ENCODE measurements at regions of chr14 and their contacts with region 1.

Region 1: DNA sequence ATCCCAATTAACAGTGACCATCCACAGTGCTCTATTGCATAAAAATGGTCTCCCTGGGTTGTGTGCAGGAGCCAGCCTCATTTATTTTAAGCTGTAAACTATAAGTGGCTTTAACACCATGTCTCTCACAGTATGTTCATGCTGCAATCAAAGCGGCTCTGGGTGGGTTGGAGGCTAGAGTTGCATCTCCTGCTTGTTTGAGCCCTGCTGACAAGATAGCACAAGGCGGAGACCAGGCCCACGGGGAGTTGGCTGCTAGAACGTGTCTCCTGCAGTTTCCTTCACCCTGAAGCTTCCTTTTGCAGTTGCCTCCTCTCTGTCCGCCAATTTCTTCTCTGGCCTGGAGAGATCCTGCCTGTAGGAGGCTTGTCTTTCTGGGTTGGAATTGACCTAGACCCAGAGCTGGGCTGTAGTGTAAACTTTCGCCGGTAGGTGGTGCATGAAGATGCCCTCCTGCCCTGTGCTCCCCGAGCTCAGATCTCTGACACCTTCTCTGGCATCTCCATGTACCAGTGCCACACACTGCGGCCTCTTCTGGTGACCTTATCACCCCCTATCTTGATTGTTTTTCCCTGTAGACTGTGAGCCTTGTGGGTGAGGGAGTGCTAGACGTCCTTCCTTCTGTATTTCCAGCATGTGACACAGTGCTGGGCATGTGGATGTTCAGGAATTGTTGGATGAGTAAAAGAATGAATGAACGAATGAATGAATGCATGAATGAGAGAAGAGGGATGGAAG is 10.3 kb downstream of the OTUB2 start:
- DNase-seq: peak; percentile 86
- ATAC-seq: peak; percentile 97
- H3K4me3 Mint-ChIP-seq: no peak overlapping the region
- H3K27ac Mint-ChIP-seq: no peak overlapping the region
- H3K4me1 Mint-ChIP-seq: peaks cover 7% of the 10 kb centered on the region
- H3K27me3 Mint-ChIP-seq: peaks cover 2% of the 10 kb centered on the region

Region 2: GRCh38 chr14:93970549-93970946 is 65.9 kb before region 1 on chr14:
- CTCF ChIA-PET with region 1: interaction called, 12 read pairs
- POLR2A ChIA-PET with region 1: no interaction called
- DNase-seq: peak; percentile 75
- ATAC-seq: peak; percentile 76
- H3K4me3 Mint-ChIP-seq: peak overlapping the region; percentile 80
- H3K27ac Mint-ChIP-seq: peak overlapping the region; percentile 95
- H3K4me1 Mint-ChIP-seq: peaks cover 86% of the 10 kb centered on the region
- H3K27me3 Mint-ChIP-seq: no peaks in the 10 kb centered on the region

Region 3: GRCh38 chr14:94026173-94026888 is 10.2 kb before region 1 on chr14 and contains the start of gene OTUB2:
- CTCF ChIA-PET with region 1: interaction called, 69 read pairs
- POLR2A ChIA-PET with region 1: no interaction called
- DNase-seq: peak; percentile 98
- ATAC-seq: peak; percentile 99
- H3K4me3 Mint-ChIP-seq: peak within 1 kb of the TSS; percentile 71
- H3K27ac Mint-ChIP-seq: peak within 1 kb of the TSS; percentile 68
- H3K4me1 Mint-ChIP-seq: peaks cover 48% of the 10 kb centered on the region
- H3K27me3 Mint-ChIP-seq: peaks cover 9% of the 10 kb centered on the region
- total RNA-seq, gene OTUB2: 1.4 to 1.7 TPM

Region 4: GRCh38 chr14:94056579-94057308 is 20.3 kb after region 1 on chr14:
- CTCF ChIA-PET with region 1: interaction called, 52 read pairs
- POLR2A ChIA-PET with region 1: no interaction called
- DNase-seq: peak; percentile 59
- ATAC-seq: peak; percentile 66
- H3K4me3 Mint-ChIP-seq: peak overlapping the region; percentile 37
- H3K27ac Mint-ChIP-seq: peak overlapping the region; percentile 71
- H3K4me1 Mint-ChIP-seq: peaks cover 67% of the 10 kb centered on the region
- H3K27me3 Mint-ChIP-seq: no peaks in the 10 kb centered on the region

Region 5: GRCh38 chr14:94129111-94129757 is 92.8 kb after region 1 on chr14 and contains the start of gene IFI27L2:
- CTCF ChIA-PET with region 1: interaction called, 45 read pairs
- POLR2A ChIA-PET with region 1: no interaction called
- DNase-seq: peak; percentile 84
- ATAC-seq: peak; percentile 98
- H3K4me3 Mint-ChIP-seq: peak within 1 kb of the TSS; percentile 78
- H3K27ac Mint-ChIP-seq: peak within 1 kb of the TSS; percentile 88
- H3K4me1 Mint-ChIP-seq: peaks cover 17% of the 10 kb centered on the region
- H3K27me3 Mint-ChIP-seq: peaks cover 11% of the 10 kb centered on the region
- total RNA-seq, gene IFI27L2: 65.2 to 74.6 TPM

Region 6: DNA sequence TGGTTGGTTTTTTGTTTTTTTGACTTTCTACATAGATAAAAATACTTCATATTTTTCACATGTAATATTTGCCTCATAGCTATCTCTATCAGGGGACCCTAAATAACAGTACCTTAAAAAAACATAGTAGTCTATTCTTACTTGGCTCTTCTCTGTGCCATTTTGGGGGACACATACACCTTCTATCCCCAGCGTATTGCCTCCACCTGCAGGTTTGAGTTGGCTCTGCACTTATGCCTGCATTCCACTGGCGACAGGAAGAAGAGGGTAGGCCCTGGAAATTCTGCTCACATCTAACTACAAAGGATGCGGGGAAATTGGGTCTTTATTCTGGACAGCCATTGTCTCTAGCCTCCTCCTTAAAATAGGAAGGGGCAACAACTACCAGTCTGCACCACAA is 106.8 kb after region 1 on chr14:
- CTCF ChIA-PET with region 1: interaction called, 108 read pairs
- POLR2A ChIA-PET with region 1: no interaction called
- DNase-seq: peak; percentile 49
- ATAC-seq: no peak
- H3K4me3 Mint-ChIP-seq: no peak overlapping the region
- H3K27ac Mint-ChIP-seq: no peak overlapping the region
- H3K4me1 Mint-ChIP-seq: peaks cover 27% of the 10 kb centered on the region
- H3K27me3 Mint-ChIP-seq: peaks cover 11% of the 10 kb centered on the region

Measured in activated CD8-positive, alpha-beta T cell treated with anti-CD3 and anti-CD28 coated beads, Interleukin-2, amount 10 ng/mL, durations not matched to agents 7 days and 5 days (primary cell).